GM12878 (cell line): ENCODE measurements at regions of chr2 and their contacts with region 1.

Region 1: GRCh38 chr2:62038975-62039771 is 133.7 kb downstream of the COMMD1 start:
- DNase-seq: peak; percentile 98
- ATAC-seq: peak; percentile 99
- H3K4me3 ChIP-seq: peak overlapping the region; percentile 16; the same call in 1 of the 2 replicates
- H3K27ac ChIP-seq: peak overlapping the region; percentile 71
- H3K4me1 ChIP-seq: peaks cover 25% of the 10 kb centered on the region
- H3K27me3 ChIP-seq: no peaks in the 10 kb centered on the region
- CTCF ChIP-seq: no peak
- EP300 ChIP-seq: peak; percentile 91 to 100
- POLR2A ChIP-seq: no peak
- RAD21 ChIP-seq: peak; percentile 33; the same call in 1 of the 2 replicates

Region 2: DNA sequence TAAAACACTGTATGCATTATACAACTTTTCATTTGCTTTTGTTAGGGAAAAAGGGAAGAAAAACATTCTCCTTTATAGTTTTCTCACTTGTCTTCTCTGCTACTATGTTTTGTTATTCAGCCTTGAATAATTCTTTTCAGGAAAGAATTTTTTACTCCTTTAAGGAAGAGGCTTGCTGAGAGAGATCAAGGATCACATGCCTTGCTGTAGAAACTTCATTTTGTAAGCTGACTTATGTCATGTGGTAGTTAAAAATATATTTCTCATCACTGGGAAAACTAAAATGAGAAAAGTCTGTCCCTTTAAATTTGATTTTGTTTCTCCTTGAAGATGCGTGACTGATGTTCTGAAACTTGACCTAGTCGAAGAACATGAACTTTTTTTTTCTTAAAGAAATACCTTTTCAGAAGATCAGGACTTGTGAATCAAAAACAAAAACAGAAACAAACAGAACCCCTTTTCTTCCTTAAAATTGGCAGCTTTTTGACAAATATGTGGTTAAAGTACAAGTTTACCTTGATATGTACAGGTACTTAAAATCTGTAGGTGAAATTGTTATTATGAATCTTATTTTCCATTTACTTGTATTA is 11.4 kb after region 1 on chr2:
- CTCF ChIA-PET with region 1: interaction called, 5 read pairs
- POLR2A ChIA-PET with region 1: interaction called, 7 read pairs
- RAD21 ChIA-PET with region 1: interaction called, 20 read pairs
- SMC1A ChIA-PET with region 1: interaction called, 66 read pairs
- in situ Hi-C with region 1: no loop called
- intact Hi-C with region 1: no loop called
- DNase-seq: no peak
- ATAC-seq: no peak
- H3K4me3 ChIP-seq: no peak overlapping the region
- H3K27ac ChIP-seq: peak overlapping the region; percentile 38
- H3K4me1 ChIP-seq: peaks cover 26% of the 10 kb centered on the region
- H3K27me3 ChIP-seq: no peaks in the 10 kb centered on the region
- CTCF ChIP-seq: no peak
- EP300 ChIP-seq: no peak
- POLR2A ChIP-seq: no peak
- RAD21 ChIP-seq: no peak

Region 3: GRCh38 chr2:62055724-62056336 is 16.7 kb after region 1 on chr2:
- CTCF ChIA-PET with region 1: interaction called, 7 read pairs
- POLR2A ChIA-PET with region 1: interaction called, 7 read pairs
- RAD21 ChIA-PET with region 1: interaction called, 67 read pairs
- SMC1A ChIA-PET with region 1: interaction called, 66 read pairs
- in situ Hi-C with region 1: no loop called
- intact Hi-C with region 1: no loop called
- DNase-seq: no peak
- ATAC-seq: peak; percentile 17; the same call in 2 of the 3 replicates
- H3K4me3 ChIP-seq: no peak overlapping the region
- H3K27ac ChIP-seq: no peak overlapping the region
- H3K4me1 ChIP-seq: peaks cover 18% of the 10 kb centered on the region
- H3K27me3 ChIP-seq: no peaks in the 10 kb centered on the region
- CTCF ChIP-seq: no peak
- EP300 ChIP-seq: no peak
- POLR2A ChIP-seq: no peak
- RAD21 ChIP-seq: no peak

Region 4: GRCh38 chr2:62065243-62065642 is 26.1 kb after region 1 on chr2:
- CTCF ChIA-PET with region 1: interaction called, 7 read pairs
- POLR2A ChIA-PET with region 1: interaction called, 13 read pairs
- RAD21 ChIA-PET with region 1: interaction called, 67 read pairs
- SMC1A ChIA-PET with region 1: interaction called, 28 read pairs
- in situ Hi-C with region 1: no loop called
- intact Hi-C with region 1: no loop called
- DNase-seq: no peak
- ATAC-seq: peak; percentile 56
- H3K4me3 ChIP-seq: peak overlapping the region; percentile 11; the same call in 1 of the 2 replicates
- H3K27ac ChIP-seq: peak overlapping the region; percentile 81
- H3K4me1 ChIP-seq: peaks cover 37% of the 10 kb centered on the region
- H3K27me3 ChIP-seq: no peaks in the 10 kb centered on the region
- CTCF ChIP-seq: no peak
- EP300 ChIP-seq: no peak
- POLR2A ChIP-seq: no peak
- RAD21 ChIP-seq: no peak

Region 5: GRCh38 chr2:62140426-62141141 is 101.4 kb after region 1 on chr2:
- CTCF ChIA-PET with region 1: interaction called, 3 read pairs
- POLR2A ChIA-PET with region 1: interaction called, 10 read pairs
- RAD21 ChIA-PET with region 1: interaction called, 13 read pairs
- SMC1A ChIA-PET with region 1: interaction called, 38 read pairs
- in situ Hi-C with region 1: no loop called
- intact Hi-C with region 1: loop called (anchors 5 kb)
- DNase-seq: peak; percentile 85
- ATAC-seq: peak; percentile 68
- H3K4me3 ChIP-seq: no peak overlapping the region
- H3K27ac ChIP-seq: peak overlapping the region; percentile 90
- H3K4me1 ChIP-seq: peaks cover 62% of the 10 kb centered on the region
- H3K27me3 ChIP-seq: no peaks in the 10 kb centered on the region
- CTCF ChIP-seq: no peak
- EP300 ChIP-seq: peak in 1 of 2 experiments; percentile 45; a peak in 1 of 4 replicates
- POLR2A ChIP-seq: no peak
- RAD21 ChIP-seq: peak; percentile 29; the same call in 1 of the 2 replicates

Region 6: GRCh38 chr2:63300835-63301234 is 1261.7 kb after region 1 on chr2:
- CTCF ChIA-PET with region 1: no interaction called
- POLR2A ChIA-PET with region 1: no interaction called
- RAD21 ChIA-PET with region 1: no interaction called
- SMC1A ChIA-PET with region 1: no interaction called
- in situ Hi-C with region 1: no loop called
- intact Hi-C with region 1: no loop called
- DNase-seq: no peak
- ATAC-seq: no peak
- H3K4me3 ChIP-seq: no peak overlapping the region
- H3K27ac ChIP-seq: no peak overlapping the region
- H3K4me1 ChIP-seq: no peaks in the 10 kb centered on the region
- H3K27me3 ChIP-seq: no peaks in the 10 kb centered on the region
- CTCF ChIP-seq: no peak
- EP300 ChIP-seq: no peak
- POLR2A ChIP-seq: no peak
- RAD21 ChIP-seq: 0 out of 2 replicates have a peak, but pooled peaks have one; percentile 11